ENCODE measurements at regions of chr19 and their contacts with region 1.

Region 1: DNA sequence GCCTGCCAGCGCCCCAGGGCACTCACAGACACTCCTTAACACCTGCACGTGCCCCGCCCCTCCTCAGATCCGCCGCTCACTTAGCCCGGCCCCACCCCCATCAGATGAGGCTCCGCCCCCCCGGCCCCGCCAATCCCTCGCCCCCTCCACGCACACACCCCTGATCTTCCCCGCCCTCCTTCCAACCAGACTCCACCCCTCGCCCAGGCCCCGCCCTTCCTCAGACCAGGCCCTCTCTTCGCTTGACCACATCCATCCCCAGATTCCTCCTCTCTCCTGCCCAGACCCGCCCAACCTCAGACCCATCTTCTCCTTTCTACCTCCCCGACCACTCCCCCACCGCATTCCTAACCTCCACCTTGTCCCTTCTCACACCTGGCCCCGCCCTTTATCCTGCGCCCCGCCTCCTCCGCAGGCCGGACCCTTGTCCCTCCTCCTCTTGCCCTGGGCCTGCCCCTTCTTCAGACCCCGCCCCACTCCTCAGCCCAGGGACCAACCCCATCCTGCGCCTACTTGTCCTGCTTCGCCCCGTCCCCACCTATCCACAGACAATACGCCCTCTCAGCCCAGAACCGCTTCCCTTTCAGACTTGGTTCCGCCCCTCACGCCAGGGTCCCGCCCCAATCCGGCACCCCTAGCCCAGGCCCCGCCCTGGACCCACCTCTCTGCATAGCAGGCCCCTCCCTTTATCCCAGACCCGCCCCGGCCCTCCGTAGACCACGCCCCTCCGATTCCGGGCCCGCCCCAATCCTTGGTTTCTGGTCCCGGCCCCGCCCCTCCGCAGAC is 452 bp upstream of the KLHL26 start:
- DNase-seq: peak; percentile 97 to 100 (median 99)
- ATAC-seq: peak; percentile 87
- H3K4me3 ChIP-seq: peak overlapping the region; percentile 64 to 79
- H3K4me3 Mint-ChIP-seq: peak overlapping the region; percentile 89
- H3K27ac ChIP-seq: peak overlapping the region; percentile 14 to 78
- H3K27ac Mint-ChIP-seq: peak overlapping the region; percentile 82
- H3K4me1 ChIP-seq: peaks cover 22% of the 10 kb centered on the region
- H3K4me1 Mint-ChIP-seq: peaks cover 36% of the 10 kb centered on the region
- H3K27me3 ChIP-seq: no peaks in the 10 kb centered on the region
- H3K27me3 Mint-ChIP-seq: peaks cover 6% of the 10 kb centered on the region
- CTCF ChIP-seq: no peak

Region 2: DNA sequence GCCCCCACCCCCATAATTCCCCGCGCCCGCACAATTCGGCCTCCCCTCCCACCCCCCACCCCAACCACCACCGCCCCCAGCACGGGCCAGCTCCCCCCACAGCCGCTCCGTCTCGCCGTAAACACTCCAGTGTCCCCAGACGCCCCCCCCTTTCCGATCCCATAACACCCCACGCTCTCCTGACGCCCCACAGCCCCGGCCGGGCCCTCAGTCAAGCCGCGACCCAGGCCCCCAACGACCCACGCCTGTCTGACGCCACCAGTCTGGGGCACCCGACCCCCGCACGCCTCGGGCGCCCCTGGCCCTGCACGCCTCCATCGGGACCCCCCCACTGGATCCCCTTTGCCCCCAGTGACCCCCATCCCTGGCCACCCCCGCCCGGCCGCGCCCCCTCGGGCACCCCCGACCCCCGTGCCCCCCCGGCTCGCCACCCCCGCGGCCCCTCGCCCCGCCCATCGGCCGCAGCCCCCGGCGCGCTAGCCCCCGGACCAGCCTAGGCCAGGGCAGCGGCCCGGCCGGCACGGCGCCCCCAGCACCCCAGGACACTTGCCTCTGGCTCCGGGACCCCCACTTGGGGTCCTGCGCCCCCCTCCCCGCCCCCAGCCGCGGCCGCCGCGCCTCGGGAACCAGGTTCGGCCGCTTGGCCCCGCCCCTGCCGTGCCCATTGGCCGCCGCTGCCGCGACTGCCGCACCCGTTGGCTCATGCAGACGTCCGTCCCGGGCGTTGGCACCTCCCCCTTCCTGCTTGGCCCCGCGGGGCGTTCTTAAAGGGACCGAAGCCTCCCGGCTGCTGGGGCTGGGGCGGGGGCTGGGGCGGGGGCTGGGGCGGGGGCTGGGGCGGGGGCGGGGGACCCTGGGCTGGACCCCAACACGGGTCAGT is 93.2 kb before region 1 on chr19 and contains the start of gene FKBP8:
- CTCF ChIA-PET with region 1: interaction called, 3 read pairs
- POLR2A ChIA-PET with region 1: no interaction called
- intact Hi-C with region 1: loop called in 1 of 2 experiments (anchors 1 kb)
- DNase-seq: peak; percentile 86 to 96 (median 94)
- ATAC-seq: peak; percentile 97
- H3K4me3 ChIP-seq: peak within 1 kb of the TSS; percentile 58 to 62
- H3K4me3 Mint-ChIP-seq: peak within 1 kb of the TSS; percentile 89
- H3K27ac ChIP-seq: peak within 1 kb of the TSS; percentile 64 to 86
- H3K27ac Mint-ChIP-seq: peak within 1 kb of the TSS; percentile 96
- H3K4me1 ChIP-seq: peaks cover 20% of the 10 kb centered on the region
- H3K4me1 Mint-ChIP-seq: peaks cover 26% of the 10 kb centered on the region
- H3K27me3 ChIP-seq: no peaks in the 10 kb centered on the region
- H3K27me3 Mint-ChIP-seq: no peaks in the 10 kb centered on the region
- CTCF ChIP-seq: no peak
- total RNA-seq, gene FKBP8: 155 to 158 TPM

Region 3: GRCh38 chr19:18612772-18613588 is 23.4 kb before region 1 on chr19 and contains the start of gene TMEM59L:
- CTCF ChIA-PET with region 1: no interaction called
- POLR2A ChIA-PET with region 1: no interaction called
- intact Hi-C with region 1: loop called in 1 of 2 experiments (anchors 2 kb)
- DNase-seq: peak in 8 of 9 experiments; percentile 19 to 74 (median 57)
- ATAC-seq: peak; percentile 71
- H3K4me3 ChIP-seq: peak within 1 kb of the TSS; percentile 29 to 54
- H3K4me3 Mint-ChIP-seq: peak within 1 kb of the TSS; percentile 79
- H3K27ac ChIP-seq: no peak within 1 kb of the TSS
- H3K27ac Mint-ChIP-seq: no peak within 1 kb of the TSS
- H3K4me1 ChIP-seq: peaks cover 26% of the 10 kb centered on the region
- H3K4me1 Mint-ChIP-seq: peaks cover 18% of the 10 kb centered on the region
- H3K27me3 ChIP-seq: peaks cover 42 to 56% of the 10 kb centered on the region in 2 experiments
- H3K27me3 Mint-ChIP-seq: peaks cover 70% of the 10 kb centered on the region
- CTCF ChIP-seq: no peak
- total RNA-seq, gene TMEM59L: not detected

Region 4: DNA sequence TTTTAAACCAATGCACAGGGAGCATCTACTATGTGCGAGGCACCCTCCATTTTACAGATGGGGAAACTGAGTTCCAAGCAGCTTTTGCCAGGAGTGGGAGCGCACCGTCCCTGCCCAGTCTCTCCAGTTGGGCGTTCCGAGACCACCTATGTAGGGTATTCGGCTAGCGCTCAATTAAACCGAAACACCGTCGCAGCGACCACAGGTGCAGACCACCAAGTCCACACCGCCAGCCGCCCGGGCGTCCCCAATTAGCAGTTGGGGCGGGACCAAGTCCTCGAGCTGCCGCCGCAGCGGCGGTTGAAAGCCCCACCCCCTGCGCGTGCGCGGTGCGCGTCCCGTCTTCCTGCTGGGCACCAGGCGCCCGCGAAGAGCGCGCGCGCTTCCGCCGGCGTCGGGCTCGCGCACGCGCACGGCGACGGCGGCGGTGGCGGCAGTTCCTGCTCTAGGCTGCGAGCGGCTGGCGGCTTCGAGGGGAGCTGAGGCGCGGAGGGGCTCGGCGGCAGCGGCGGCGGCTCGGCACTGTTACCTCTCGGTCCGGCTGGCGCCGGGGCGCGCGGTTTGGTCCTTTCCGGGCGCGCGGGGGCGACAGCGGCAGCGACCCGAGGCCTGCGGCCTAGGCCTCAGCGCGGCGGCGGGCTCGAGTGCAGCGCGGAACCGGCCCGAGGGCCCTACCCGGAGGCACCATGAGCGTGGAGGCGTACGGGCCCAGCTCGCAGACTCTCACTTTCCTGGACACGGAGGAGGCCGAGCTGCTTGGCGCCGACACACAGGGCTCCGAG is 195.3 kb after region 1 on chr19 and contains the start of gene UPF1:
- CTCF ChIA-PET with region 1: no interaction called
- POLR2A ChIA-PET with region 1: no interaction called
- intact Hi-C with region 1: loop called (anchors 1 to 2 kb)
- DNase-seq: peak; percentile 92 to 98 (median 96)
- ATAC-seq: peak; percentile 79
- H3K4me3 ChIP-seq: peak within 1 kb of the TSS; percentile 80 to 86
- H3K4me3 Mint-ChIP-seq: peak within 1 kb of the TSS; percentile 92
- H3K27ac ChIP-seq: peak within 1 kb of the TSS; percentile 69 to 73
- H3K27ac Mint-ChIP-seq: peak within 1 kb of the TSS; percentile 89
- H3K4me1 ChIP-seq: peaks cover 41% of the 10 kb centered on the region
- H3K4me1 Mint-ChIP-seq: peaks cover 38% of the 10 kb centered on the region
- H3K27me3 ChIP-seq: peaks cover 0 to 3% of the 10 kb centered on the region in 2 experiments
- H3K27me3 Mint-ChIP-seq: peaks cover 2% of the 10 kb centered on the region
- CTCF ChIP-seq: no peak
- total RNA-seq, gene UPF1: 157 to 175 TPM

Region 5: GRCh38 chr19:19033426-19034203 is 397.2 kb after region 1 on chr19 and contains the starts of genes ARMC6 and SUGP2:
- CTCF ChIA-PET with region 1: no interaction called
- POLR2A ChIA-PET with region 1: no interaction called
- intact Hi-C with region 1: loop called in 1 of 2 experiments (anchors 2 kb)
- DNase-seq: peak; percentile 79 to 95 (median 89)
- ATAC-seq: peak; percentile 68
- H3K4me3 ChIP-seq: peak within 1 kb of the TSS; percentile 71 to 81
- H3K4me3 Mint-ChIP-seq: peak within 1 kb of the TSS; percentile 97
- H3K27ac ChIP-seq: peak within 1 kb of the TSS; percentile 65 to 85
- H3K27ac Mint-ChIP-seq: peak within 1 kb of the TSS; percentile 97
- H3K4me1 ChIP-seq: peaks cover 18% of the 10 kb centered on the region
- H3K4me1 Mint-ChIP-seq: peaks cover 33% of the 10 kb centered on the region
- H3K27me3 ChIP-seq: no peaks in the 10 kb centered on the region
- H3K27me3 Mint-ChIP-seq: no peaks in the 10 kb centered on the region
- CTCF ChIP-seq: no peak
- total RNA-seq, gene ARMC6: 4.6 to 5.3 TPM
- total RNA-seq, gene SUGP2: 85.4 to 90.8 TPM